PC-3 (cell line): ENCODE measurements at regions of chr16 and their contacts with region 1.

Region 1: GRCh38 chr16:74075393-74075792 is 221.2 kb upstream of the PSMD7 start:
- DNase-seq: no peak
- ATAC-seq: no peak
- H3K4me3 ChIP-seq: no peak overlapping the region
- H3K27ac ChIP-seq: no peak overlapping the region
- H3K4me1 ChIP-seq: no peaks in the 10 kb centered on the region
- H3K27me3 ChIP-seq: peaks cover 7% of the 10 kb centered on the region; the same call in 1 of the 2 replicates
- CTCF ChIP-seq: no peak

Region 2: GRCh38 chr16:73831220-73831619 is 244.2 kb before region 1 on chr16:
- CTCF ChIA-PET with region 1: no interaction called
- POLR2A ChIA-PET with region 1: no interaction called
- intact Hi-C with region 1: no loop called
- DNase-seq: no peak
- ATAC-seq: no peak
- H3K4me3 ChIP-seq: no peak overlapping the region
- H3K27ac ChIP-seq: no peak overlapping the region
- H3K4me1 ChIP-seq: no peaks in the 10 kb centered on the region
- H3K27me3 ChIP-seq: no peaks in the 10 kb centered on the region
- CTCF ChIP-seq: no peak

Region 3: GRCh38 chr16:74107795-74108618 is 32.6 kb after region 1 on chr16:
- CTCF ChIA-PET with region 1: interaction called, 10 read pairs
- POLR2A ChIA-PET with region 1: no interaction called
- intact Hi-C with region 1: no loop called
- DNase-seq: peak; percentile 56
- ATAC-seq: peak; percentile 50
- H3K4me3 ChIP-seq: peak overlapping the region; percentile 42
- H3K27ac ChIP-seq: no peak overlapping the region
- H3K4me1 ChIP-seq: no peaks in the 10 kb centered on the region
- H3K27me3 ChIP-seq: no peaks in the 10 kb centered on the region
- CTCF ChIP-seq: peak; percentile 67